GM10248 (cell line): ENCODE measurements at regions of chr13 and their contacts with region 1.

Region 1: GRCh38 chr13:30132623-30133553 is 174.5 kb downstream of the KATNAL1 start:
- DNase-seq: peak; percentile 90
- CTCF ChIP-seq: peak; percentile 97

Region 2: DNA sequence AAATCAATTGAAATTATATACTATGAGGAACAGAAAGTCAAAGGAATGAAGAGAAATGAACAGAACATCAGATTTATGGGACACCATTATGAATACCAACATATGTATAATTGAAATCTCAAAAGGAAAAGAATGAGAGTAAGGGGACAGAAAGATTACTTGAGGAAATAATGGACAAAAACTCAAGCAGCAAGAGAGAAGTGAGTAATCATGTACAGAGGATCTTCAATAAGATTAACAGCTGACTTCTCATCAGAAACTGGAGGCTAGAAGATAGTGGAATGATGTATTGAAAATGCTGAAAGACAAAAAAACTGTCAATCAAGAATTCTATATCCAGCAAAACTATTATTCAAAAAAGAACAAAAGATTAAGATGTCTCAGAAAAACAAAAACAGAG is 1302.3 kb before region 1 on chr13:
- CTCF ChIA-PET with region 1: no interaction called
- POLR2A ChIA-PET with region 1: no interaction called
- DNase-seq: no peak
- CTCF ChIP-seq: no peak

Region 3: GRCh38 chr13:29771247-29771646 is 361.6 kb before region 1 on chr13:
- CTCF ChIA-PET with region 1: interaction called, 10 read pairs
- POLR2A ChIA-PET with region 1: no interaction called
- DNase-seq: no peak
- CTCF ChIP-seq: peak; percentile 52

Region 4: DNA sequence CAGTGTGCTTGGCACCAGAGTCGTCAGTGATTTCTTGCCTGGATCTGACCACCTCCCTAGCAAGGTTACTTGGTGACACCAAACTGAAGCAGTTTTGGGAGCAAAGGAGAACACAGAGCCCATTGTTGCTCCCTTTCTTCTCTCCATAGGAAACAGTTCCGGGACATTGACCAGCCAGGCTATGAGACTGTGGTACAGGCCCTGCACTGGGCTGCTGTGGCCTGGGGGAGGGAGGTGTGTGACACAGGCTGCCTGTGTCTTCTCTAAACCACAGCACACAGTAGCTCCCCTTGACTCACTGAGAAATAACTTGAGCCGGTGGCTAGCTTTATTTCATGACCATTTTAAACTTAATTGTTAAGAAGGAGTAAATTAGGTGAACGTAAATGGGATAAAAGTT is 67.7 kb before region 1 on chr13:
- CTCF ChIA-PET with region 1: no interaction called
- POLR2A ChIA-PET with region 1: no interaction called
- DNase-seq: no peak
- CTCF ChIP-seq: no peak

Region 5: GRCh38 chr13:30153545-30154441 is 20.9 kb after region 1 on chr13:
- CTCF ChIA-PET with region 1: interaction called, 141 read pairs
- POLR2A ChIA-PET with region 1: no interaction called
- DNase-seq: no peak
- CTCF ChIP-seq: no peak

Region 6: DNA sequence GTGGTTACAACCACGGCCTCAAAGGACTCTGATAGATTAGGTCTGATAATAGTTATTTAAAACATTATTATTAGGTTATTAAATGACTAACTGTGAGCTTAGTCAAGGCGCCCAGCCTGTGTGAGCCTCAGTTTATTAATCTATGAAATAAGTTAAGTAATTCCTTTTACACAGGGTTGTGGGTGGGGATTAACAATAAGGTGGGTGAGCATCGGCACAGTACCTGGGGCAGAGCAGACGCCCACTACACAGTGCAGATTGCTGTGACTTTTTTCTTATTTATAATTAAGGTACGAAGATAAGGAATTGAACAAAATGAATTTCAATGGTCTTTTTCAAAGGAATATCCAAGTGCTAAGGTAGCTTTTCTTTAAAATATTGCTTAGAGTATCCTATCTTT is 42.3 kb after region 1 on chr13:
- CTCF ChIA-PET with region 1: interaction called, 12 read pairs
- POLR2A ChIA-PET with region 1: no interaction called
- DNase-seq: no peak
- CTCF ChIP-seq: no peak

Region 7: DNA sequence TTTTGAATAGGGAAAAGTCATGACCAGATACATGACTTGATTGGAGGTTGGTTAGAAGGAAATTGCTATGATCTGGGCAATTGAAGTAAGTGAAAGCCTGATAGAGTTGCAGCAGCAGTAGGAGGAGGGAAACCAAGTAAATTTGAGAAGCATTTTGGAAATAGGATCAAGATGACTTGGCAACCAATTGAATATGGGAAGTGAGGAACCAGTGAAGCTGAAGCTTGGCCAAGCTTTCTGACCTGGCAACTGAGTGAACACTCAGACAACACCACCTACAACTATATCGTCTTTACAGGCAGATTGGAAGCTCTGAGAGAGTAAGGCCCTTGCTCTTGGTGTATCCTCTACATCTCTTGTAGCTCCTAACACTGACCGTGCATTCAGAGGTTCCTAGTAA is 190.6 kb after region 1 on chr13:
- CTCF ChIA-PET with region 1: interaction called, 10 read pairs
- POLR2A ChIA-PET with region 1: no interaction called
- DNase-seq: no peak
- CTCF ChIP-seq: no peak

Region 8: DNA sequence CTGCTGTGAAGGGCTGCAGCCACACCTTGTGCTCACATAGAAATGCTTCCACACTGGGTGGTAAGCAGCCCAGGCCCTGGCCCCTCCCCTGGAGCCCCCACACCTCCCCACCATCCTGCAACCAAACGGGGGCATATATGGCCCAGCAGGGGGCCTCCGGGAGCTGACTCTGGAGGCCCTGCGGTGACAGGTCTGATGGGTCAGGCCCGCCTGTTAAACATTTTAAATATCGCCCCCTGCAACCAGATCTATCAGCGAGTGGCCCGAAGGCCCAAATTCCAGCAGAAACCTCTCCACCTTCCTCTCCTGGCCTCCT is 222.5 kb after region 1 on chr13:
- CTCF ChIA-PET with region 1: interaction called, 12 read pairs
- POLR2A ChIA-PET with region 1: no interaction called
- DNase-seq: peak; percentile 65
- CTCF ChIP-seq: peak; percentile 48

Region 9: DNA sequence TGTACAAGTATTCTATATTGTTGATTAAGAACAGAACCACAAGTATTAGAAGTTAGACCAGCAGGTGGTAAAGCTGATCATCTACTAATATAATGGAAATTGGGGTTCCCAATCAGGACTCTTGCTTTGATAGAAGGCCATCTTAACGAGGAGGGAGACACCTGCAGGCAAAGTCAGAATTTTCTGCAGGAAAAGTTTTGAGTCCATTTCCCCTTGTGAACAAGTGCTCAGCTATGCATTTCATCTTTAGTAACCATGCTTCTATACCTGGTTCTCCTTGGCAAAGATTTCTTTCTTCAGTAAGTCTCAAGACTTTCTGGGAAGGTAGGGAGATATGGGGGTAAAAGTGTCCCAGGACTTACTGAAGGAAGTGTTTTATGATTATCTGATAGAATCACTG is 448.7 kb after region 1 on chr13:
- CTCF ChIA-PET with region 1: interaction called, 20 read pairs
- POLR2A ChIA-PET with region 1: no interaction called
- DNase-seq: peak; percentile 35
- CTCF ChIP-seq: peak; percentile 39